Activated CD4-positive, alpha-beta memory T cell treated with anti-CD3 and anti-CD28 coated beads for 36 hours (primary cell): ENCODE measurements at regions of chr10 and their contacts with region 1.

Region 1: DNA sequence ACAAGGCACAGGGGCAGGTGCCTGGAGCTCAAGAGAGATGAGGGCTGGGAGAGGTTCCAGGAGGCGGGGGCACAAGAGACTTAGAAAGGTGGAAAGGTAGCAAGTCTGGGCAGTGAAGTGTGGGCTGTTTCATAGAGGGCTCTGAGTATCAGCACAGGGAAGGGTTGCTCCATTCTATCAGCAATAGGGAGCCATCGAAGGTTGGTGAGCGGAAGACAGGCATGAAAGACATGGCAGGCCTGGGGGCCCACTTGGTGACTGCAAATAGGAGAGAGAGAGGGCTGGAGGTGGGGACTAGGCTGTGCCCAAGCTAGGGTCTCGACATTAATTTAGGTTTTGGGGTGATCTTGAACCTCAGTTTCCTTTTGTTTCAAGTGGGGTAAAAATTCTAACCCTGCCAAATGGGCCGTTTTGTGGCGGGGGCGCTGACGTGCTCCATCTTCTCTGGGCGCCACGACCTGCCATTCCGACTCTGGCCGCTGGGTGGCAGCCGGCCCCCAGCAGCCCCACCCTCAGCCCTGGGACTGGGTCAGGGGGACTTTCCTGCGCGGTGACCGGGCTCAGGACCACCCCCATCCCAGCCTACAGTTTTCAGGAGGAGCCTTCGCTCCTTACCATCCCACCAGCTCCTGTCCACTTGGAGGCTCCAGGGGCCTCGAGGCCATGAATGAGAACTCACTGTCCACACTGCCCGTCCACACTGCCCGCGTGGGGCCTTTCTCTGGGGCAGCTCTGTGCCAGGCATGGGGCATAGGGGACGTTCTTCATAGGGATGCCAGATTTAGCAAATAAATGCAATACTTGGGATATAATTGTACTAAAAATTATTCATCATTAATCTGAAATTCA is 37.2 kb upstream of the PCBD1 start:
- DNase-seq: peak; percentile 65
- H3K4me3 Mint-ChIP-seq: no peak overlapping the region
- H3K27ac Mint-ChIP-seq: no peak overlapping the region
- H3K4me1 Mint-ChIP-seq: peaks cover 6% of the 10 kb centered on the region
- H3K27me3 Mint-ChIP-seq: peaks cover 5% of the 10 kb centered on the region

Region 2: DNA sequence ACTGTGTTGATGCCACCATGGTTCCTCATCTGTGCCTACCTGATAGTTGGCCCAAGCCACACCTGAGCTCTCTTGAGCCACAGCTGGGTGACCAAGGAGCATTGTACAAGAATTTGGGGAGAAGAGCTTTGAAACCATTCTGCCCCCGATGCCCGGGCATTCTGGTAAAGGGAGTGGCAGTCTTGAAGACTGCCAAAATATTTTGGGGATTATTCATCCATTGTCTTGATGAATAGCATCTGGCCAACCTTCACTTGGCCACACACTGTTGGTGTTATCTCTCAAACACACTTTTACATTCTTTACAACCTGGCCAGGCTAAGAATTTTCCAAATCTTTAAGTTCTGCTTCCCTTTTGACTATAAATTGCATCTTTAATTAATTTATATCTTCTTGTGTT is 75.9 kb after region 1 on chr10:
- CTCF ChIA-PET with region 1: no interaction called
- POLR2A ChIA-PET with region 1: no interaction called
- intact Hi-C with region 1: no loop called
- DNase-seq: no peak
- H3K4me3 Mint-ChIP-seq: no peak overlapping the region
- H3K27ac Mint-ChIP-seq: no peak overlapping the region
- H3K4me1 Mint-ChIP-seq: no peaks in the 10 kb centered on the region
- H3K27me3 Mint-ChIP-seq: peaks cover 3% of the 10 kb centered on the region

Region 3: DNA sequence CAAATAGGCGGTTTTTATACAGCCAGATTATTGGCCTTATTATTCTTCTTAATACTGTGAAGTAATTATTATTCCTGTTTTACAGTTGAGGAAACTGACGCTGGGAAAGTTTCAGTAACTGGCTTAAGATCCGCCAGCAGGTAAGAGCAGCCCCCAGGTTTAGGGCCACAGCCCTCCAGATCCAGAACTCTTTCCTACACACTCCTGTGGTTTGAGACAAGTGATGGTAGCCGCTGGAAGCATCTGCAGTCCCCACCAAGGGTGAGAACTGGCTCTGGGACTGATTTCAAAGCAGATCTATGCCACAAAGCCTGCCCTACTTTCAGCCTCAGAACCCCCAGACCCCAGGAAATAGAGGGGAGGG is 283.7 kb after region 1 on chr10:
- CTCF ChIA-PET with region 1: interaction called, 13 read pairs
- POLR2A ChIA-PET with region 1: no interaction called
- intact Hi-C with region 1: loop called (anchors 1 kb)
- DNase-seq: no peak
- H3K4me3 Mint-ChIP-seq: no peak overlapping the region
- H3K27ac Mint-ChIP-seq: no peak overlapping the region
- H3K4me1 Mint-ChIP-seq: peaks cover 6% of the 10 kb centered on the region
- H3K27me3 Mint-ChIP-seq: peaks cover 67% of the 10 kb centered on the region